ENCODE measurements at regions of chr1 and their contacts with region 1.

Region 1: GRCh38 chr1:209747580-209748262 is 8.1 kb upstream of the TRAF3IP3 start:
- DNase-seq: peak; percentile 95
- ATAC-seq: peak; percentile 79
- H3K4me3 Mint-ChIP-seq: peak overlapping the region; percentile 53
- H3K27ac Mint-ChIP-seq: peak overlapping the region; percentile 95
- H3K4me1 Mint-ChIP-seq: peaks cover 64% of the 10 kb centered on the region
- H3K27me3 Mint-ChIP-seq: no peaks in the 10 kb centered on the region
- CTCF ChIP-seq: peak; percentile 97

Region 2: DNA sequence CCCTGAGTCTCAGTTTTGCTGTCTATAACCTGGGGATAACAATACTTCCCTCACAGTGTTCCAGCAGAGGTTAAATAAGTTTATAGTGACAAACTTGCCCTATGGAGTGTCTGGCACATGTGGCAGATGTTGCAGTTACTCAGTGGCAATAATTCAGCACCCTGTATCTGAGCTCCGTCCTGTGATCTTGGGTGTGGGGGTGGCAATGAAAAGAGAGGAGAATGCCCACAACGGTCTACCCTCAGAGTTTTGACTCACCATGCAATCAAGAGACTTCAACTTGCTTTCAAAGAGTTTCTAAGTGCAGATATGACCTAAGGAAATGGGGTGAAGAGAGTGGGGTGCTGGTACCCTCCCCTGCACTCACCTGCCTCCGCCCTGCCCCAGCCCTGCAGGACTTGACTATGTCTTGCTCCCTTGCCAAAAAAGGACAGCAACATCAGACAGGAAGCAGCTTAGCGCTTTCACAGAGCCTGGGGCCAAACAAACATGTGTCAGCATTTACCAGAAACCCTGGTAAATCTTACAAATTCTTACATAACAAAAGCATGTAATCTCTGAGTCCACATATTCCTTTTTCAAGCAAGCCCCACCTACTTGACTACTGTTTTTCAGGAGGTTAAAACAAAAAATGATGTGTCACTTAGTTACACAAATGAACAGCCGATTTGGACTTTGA is 349.3 kb before region 1 on chr1:
- CTCF ChIA-PET with region 1: no interaction called
- POLR2A ChIA-PET with region 1: no interaction called
- intact Hi-C with region 1: no loop called
- DNase-seq: no peak
- ATAC-seq: no peak
- H3K4me3 Mint-ChIP-seq: no peak overlapping the region
- H3K27ac Mint-ChIP-seq: no peak overlapping the region
- H3K4me1 Mint-ChIP-seq: no peaks in the 10 kb centered on the region
- H3K27me3 Mint-ChIP-seq: peaks cover 10% of the 10 kb centered on the region
- CTCF ChIP-seq: no peak

Region 3: DNA sequence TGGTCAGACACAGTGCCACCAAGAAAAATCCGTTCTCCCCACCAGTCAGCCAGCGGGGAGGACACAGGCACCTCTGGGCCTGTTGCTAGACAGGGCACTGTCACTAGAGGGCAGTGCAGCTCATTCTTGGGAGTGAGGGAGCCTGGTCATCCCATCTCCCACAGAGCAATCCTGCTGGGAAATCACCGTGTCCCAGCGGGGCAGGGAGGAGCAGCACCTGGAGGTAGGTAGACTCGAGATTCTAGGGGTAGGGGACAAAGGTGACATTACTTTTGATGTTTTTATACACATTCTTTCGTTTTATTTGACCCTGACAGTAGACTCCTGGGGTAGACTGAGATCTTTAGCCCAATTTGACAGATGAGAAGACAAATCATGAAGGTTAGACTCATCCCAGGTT is 170.9 kb before region 1 on chr1:
- CTCF ChIA-PET with region 1: interaction called, 6 read pairs
- POLR2A ChIA-PET with region 1: no interaction called
- intact Hi-C with region 1: loop called (anchors 2 kb)
- DNase-seq: peak; percentile 78
- ATAC-seq: peak; percentile 97
- H3K4me3 Mint-ChIP-seq: no peak overlapping the region
- H3K27ac Mint-ChIP-seq: no peak overlapping the region
- H3K4me1 Mint-ChIP-seq: no peaks in the 10 kb centered on the region
- H3K27me3 Mint-ChIP-seq: peaks cover 3% of the 10 kb centered on the region
- CTCF ChIP-seq: peak; percentile 95

Region 4: DNA sequence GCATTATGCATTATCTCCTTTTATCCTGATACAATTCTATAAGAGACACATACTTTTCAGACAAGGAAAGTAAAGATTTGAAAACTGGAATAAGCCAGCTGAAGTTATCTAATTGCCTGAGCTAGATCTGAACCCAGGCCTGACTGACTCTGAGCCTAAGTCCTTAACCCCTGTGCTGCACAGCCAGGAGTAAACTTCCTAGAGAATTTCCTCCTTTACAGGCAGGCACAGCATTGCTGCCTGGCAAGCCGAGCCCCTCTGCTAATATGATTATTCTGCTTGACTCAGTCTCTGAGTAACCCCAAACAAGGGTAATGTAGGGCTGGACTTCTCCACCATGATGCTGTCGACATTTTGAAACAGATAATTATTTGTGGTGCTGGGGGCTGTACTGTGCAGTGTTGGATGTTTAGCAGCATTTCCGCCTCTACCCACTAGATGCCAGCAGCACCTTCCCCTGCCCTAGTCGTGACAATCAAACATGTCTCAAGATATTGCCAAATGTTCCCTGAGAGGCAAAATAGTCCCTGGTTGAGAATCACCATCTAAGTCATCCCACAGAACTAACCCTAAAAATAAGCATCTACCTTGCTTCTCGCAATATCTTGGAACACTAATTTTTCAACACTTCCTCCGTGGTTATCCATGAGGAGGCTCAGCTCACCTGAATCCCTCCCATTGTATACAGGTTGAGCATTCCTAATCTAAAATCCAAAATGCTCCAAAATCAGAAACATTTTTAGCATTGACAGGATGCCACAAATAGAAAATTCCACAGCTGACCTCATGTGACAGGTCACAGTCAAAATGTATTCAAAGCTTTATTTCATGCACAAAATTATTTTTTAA is 145.7 kb before region 1 on chr1:
- CTCF ChIA-PET with region 1: interaction called, 13 read pairs
- POLR2A ChIA-PET with region 1: no interaction called
- intact Hi-C with region 1: loop called (anchors 10 kb)
- DNase-seq: peak; percentile 63
- ATAC-seq: peak; percentile 97
- H3K4me3 Mint-ChIP-seq: no peak overlapping the region
- H3K27ac Mint-ChIP-seq: no peak overlapping the region
- H3K4me1 Mint-ChIP-seq: no peaks in the 10 kb centered on the region
- H3K27me3 Mint-ChIP-seq: peaks cover 13% of the 10 kb centered on the region
- CTCF ChIP-seq: peak; percentile 62

Region 5: DNA sequence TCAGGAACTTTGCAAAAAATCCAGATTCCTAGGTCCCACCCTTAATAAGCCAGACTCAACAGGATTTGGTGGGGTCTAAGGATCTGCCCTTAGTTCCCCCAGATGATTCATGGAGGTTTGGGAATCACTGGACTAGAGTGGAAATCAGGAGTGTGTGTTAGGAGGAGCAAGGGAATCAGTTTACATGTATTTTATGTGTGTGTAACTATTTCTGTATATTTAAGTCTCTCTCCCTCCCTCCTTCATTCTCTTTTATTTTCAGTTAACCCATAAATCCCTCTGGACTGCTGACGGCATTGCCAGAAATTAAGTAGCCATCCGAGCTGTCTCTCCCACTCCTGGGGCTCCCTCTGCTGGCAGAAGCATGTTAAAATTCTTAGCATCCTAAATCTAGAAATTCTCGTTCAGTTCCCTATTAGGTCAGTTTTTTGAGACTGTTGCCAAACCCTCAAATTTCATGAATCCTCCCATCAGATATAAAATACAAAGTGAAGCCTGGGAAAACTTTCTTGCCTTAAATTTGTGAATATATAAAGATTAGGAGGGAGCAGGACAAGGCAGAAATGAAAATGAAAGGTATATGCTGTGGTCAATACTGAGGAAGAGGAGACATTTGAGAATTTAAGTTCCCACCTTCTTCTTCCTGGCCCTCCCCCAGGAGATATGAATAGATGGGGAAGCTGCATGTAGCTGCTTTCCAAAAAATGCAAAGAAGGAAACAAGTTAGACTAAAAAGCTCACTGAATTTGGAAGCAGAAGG is 54.8 kb before region 1 on chr1:
- CTCF ChIA-PET with region 1: interaction called, 21 read pairs
- POLR2A ChIA-PET with region 1: interaction called, 4 read pairs
- intact Hi-C with region 1: loop called (anchors 5 kb)
- DNase-seq: peak; percentile 80
- ATAC-seq: peak; percentile 78
- H3K4me3 Mint-ChIP-seq: no peak overlapping the region
- H3K27ac Mint-ChIP-seq: no peak overlapping the region
- H3K4me1 Mint-ChIP-seq: peaks cover 18% of the 10 kb centered on the region
- H3K27me3 Mint-ChIP-seq: peaks cover 1% of the 10 kb centered on the region
- CTCF ChIP-seq: peak; percentile 97

Region 6: GRCh38 chr1:209723756-209724693 is 23.7 kb before region 1 on chr1:
- CTCF ChIA-PET with region 1: interaction called, 27 read pairs
- POLR2A ChIA-PET with region 1: interaction called, 8 read pairs
- intact Hi-C with region 1: no loop called
- DNase-seq: peak; percentile 66
- ATAC-seq: peak; percentile 84
- H3K4me3 Mint-ChIP-seq: peak overlapping the region; percentile 26
- H3K27ac Mint-ChIP-seq: peak overlapping the region; percentile 97
- H3K4me1 Mint-ChIP-seq: peaks cover 49% of the 10 kb centered on the region
- H3K27me3 Mint-ChIP-seq: no peaks in the 10 kb centered on the region
- CTCF ChIP-seq: no peak

Region 7: GRCh38 chr1:209761011-209761635 is 13.4 kb after region 1 on chr1:
- CTCF ChIA-PET with region 1: interaction called, 105 read pairs
- POLR2A ChIA-PET with region 1: interaction called, 242 read pairs
- intact Hi-C with region 1: no loop called
- DNase-seq: no peak
- ATAC-seq: no peak
- H3K4me3 Mint-ChIP-seq: peak overlapping the region; percentile 8
- H3K27ac Mint-ChIP-seq: peak overlapping the region; percentile 83
- H3K4me1 Mint-ChIP-seq: peaks cover 70% of the 10 kb centered on the region
- H3K27me3 Mint-ChIP-seq: no peaks in the 10 kb centered on the region
- CTCF ChIP-seq: no peak

Region 8: GRCh38 chr1:209827384-209828262 is 79.9 kb after region 1 on chr1 and contains the start of gene UTP25:
- CTCF ChIA-PET with region 1: interaction called, 11 read pairs
- POLR2A ChIA-PET with region 1: no interaction called
- intact Hi-C with region 1: no loop called
- DNase-seq: peak; percentile 98
- ATAC-seq: peak; percentile 93
- H3K4me3 Mint-ChIP-seq: peak within 1 kb of the TSS; percentile 76
- H3K27ac Mint-ChIP-seq: peak within 1 kb of the TSS; percentile 89
- H3K4me1 Mint-ChIP-seq: peaks cover 47% of the 10 kb centered on the region
- H3K27me3 Mint-ChIP-seq: peaks cover 4% of the 10 kb centered on the region
- CTCF ChIP-seq: peak; percentile 20
- total RNA-seq, gene UTP25: 8.9 to 9.5 TPM